CD4-positive, alpha-beta T cell (primary cell): ENCODE measurements at regions of chr18 and their contacts with region 1.

Region 1: DNA sequence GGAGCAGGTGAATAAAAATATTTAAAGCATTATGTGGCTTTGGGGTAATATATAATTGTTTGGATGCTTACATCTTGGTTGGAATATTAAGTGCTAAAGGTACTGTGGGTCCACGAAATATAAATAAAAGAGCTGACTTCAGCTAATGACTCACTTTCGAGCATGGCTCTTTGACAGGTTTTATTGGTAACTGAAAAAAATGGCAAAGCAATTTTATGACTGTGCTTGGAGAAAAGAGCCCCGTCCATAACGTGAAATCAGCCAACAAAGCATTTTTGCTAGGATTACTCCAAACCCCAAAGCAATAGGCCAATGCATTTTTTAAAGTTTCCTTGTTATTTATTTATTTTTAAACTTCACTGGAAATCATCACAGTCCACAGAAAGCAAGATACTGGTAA is 397.2 kb upstream of the CDH19 start:
- DNase-seq: no peak
- ATAC-seq: no peak
- H3K4me3 ChIP-seq: no peak overlapping the region
- H3K4me3 Mint-ChIP-seq: no peak overlapping the region
- H3K27ac ChIP-seq: no peak overlapping the region
- H3K27ac Mint-ChIP-seq: no peak overlapping the region
- H3K4me1 ChIP-seq: no peaks in the 10 kb centered on the region
- H3K4me1 Mint-ChIP-seq: no peaks in the 10 kb centered on the region
- H3K27me3 ChIP-seq: no peaks in the 10 kb centered on the region
- H3K27me3 Mint-ChIP-seq: no peaks in the 10 kb centered on the region
- CTCF ChIP-seq: no peak

Region 2: DNA sequence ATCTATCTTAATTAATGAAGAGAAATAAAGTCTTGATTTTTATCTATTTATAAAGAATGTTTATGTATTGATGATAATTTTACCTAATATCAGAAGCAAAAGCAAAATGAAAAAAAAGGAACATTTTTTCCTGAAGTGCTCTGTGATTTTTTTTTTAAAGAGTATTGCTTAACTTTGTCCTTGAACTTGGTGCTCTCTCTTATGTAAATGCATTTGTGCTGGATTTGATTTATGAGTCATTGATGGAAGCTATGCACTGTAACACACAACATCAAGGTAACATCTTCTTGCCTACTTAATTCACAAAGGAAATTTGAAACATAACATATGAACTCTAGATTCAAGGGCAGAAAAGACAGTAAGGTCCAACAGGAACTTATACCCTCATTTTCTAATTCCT is 84.2 kb before region 1 on chr18:
- CTCF ChIA-PET with region 1: no interaction called
- POLR2A ChIA-PET with region 1: no interaction called
- intact Hi-C with region 1: no loop called
- DNase-seq: no peak
- ATAC-seq: no peak
- H3K4me3 ChIP-seq: no peak overlapping the region
- H3K4me3 Mint-ChIP-seq: no peak overlapping the region
- H3K27ac ChIP-seq: no peak overlapping the region
- H3K27ac Mint-ChIP-seq: no peak overlapping the region
- H3K4me1 ChIP-seq: no peaks in the 10 kb centered on the region
- H3K4me1 Mint-ChIP-seq: no peaks in the 10 kb centered on the region
- H3K27me3 ChIP-seq: no peaks in the 10 kb centered on the region
- H3K27me3 Mint-ChIP-seq: no peaks in the 10 kb centered on the region
- CTCF ChIP-seq: no peak

Region 3: DNA sequence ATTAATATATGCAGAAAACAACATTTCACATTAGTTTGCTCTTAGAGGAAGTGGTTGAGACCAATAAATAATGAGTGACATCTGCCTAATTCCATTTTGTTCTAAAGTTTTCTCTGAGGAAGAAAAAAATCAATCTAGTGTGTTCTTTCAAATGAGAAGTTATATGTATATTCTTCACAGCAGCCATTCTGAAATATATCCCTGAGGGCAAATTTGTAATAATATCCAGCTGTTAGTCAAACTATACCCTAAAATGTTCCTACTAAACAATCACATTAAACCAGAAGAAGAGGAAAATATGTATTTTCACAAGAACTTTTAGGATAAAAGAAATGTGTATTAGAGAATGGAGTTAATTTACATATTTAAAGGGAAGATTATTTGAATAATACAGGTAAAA is 22.0 kb before region 1 on chr18:
- CTCF ChIA-PET with region 1: no interaction called
- POLR2A ChIA-PET with region 1: no interaction called
- intact Hi-C with region 1: loop called in 1 of 2 experiments (anchors 1 kb)
- DNase-seq: no peak
- ATAC-seq: no peak
- H3K4me3 ChIP-seq: no peak overlapping the region
- H3K4me3 Mint-ChIP-seq: no peak overlapping the region
- H3K27ac ChIP-seq: no peak overlapping the region
- H3K27ac Mint-ChIP-seq: no peak overlapping the region
- H3K4me1 ChIP-seq: no peaks in the 10 kb centered on the region
- H3K4me1 Mint-ChIP-seq: no peaks in the 10 kb centered on the region
- H3K27me3 ChIP-seq: no peaks in the 10 kb centered on the region
- H3K27me3 Mint-ChIP-seq: no peaks in the 10 kb centered on the region
- CTCF ChIP-seq: no peak